Caco-2 (cell line): ENCODE measurements at regions of chr14 and their contacts with region 1.

Region 1: DNA sequence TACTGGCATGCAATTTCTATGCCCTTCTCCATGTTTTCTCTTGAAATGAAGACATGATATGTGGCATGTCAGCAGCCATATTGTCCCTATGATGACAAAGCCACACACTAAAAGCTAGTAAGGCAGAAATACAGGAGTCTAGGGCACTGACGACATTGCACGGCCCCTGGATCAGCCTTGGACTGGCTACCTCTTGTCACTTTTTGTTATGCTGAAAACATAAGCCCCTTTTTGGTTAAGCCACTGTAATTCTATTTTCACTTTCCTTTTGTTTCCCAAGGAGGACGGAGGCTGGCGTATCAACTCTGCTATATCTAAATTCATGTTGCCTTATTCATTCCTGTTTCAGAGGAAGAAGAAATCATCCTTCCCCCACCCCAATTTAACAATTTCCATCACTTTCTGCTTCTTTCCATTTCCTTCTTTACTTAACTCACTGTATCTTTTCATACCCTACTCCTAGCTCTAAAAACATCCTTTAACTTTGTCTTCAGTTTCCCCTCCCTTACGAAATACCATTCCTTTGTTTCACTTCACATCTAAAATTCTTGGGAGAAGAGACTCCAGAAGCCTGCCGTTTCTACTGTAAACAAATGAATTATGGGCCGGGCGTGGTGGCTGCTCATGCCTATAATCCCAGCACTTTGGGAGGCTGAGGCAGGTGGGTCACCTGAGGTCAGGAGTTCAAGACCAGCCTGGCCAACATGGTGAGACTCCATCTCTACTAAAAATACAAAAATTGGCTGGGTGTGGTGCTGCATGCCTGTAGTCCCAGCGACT is 364.1 kb downstream of the PCNX1 start:
- DNase-seq: no peak
- H3K4me3 ChIP-seq: no peak overlapping the region
- H3K4me3 Mint-ChIP-seq: no peak overlapping the region
- H3K27ac Mint-ChIP-seq: no peak overlapping the region
- H3K4me1 ChIP-seq: no peaks in the 10 kb centered on the region
- H3K4me1 Mint-ChIP-seq: no peaks in the 10 kb centered on the region
- H3K27me3 ChIP-seq: no peaks in the 10 kb centered on the region
- H3K27me3 Mint-ChIP-seq: no peaks in the 10 kb centered on the region
- CTCF ChIP-seq: no peak

Region 2: DNA sequence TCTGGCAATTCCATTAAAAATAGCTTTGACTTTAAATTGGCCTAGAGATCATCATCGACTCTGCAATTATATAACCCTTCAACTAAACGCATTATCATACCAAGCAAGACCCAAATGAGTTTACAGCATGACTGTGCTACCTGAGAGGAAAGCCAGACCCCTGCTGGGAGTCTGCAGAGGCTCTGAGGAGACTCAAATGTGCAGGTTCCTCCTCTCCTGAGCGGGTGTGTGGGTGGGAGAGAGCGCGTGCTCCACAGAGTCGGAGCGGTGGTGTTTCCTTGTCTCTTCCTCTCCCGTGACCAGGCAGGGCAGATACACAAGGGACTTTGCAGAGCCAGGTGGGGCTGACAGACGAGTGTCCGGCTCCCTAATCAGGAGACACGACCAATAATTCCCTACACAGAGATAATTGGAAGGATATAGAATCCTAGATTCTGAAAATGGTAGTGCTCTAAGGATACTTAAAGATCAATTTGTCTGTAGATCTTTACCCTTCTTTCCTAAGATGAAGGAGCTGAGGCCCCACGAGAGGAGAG is 1156.7 kb before region 1 on chr14:
- CTCF ChIA-PET with region 1: no interaction called
- POLR2A ChIA-PET with region 1: no interaction called
- intact Hi-C with region 1: loop called (anchors 5 kb)
- DNase-seq: no peak
- H3K4me3 ChIP-seq: no peak overlapping the region
- H3K4me3 Mint-ChIP-seq: no peak overlapping the region
- H3K27ac Mint-ChIP-seq: no peak overlapping the region
- H3K4me1 ChIP-seq: no peaks in the 10 kb centered on the region
- H3K4me1 Mint-ChIP-seq: no peaks in the 10 kb centered on the region
- H3K27me3 ChIP-seq: no peaks in the 10 kb centered on the region; the same call in 1 of the 2 replicates
- H3K27me3 Mint-ChIP-seq: peaks cover 14% of the 10 kb centered on the region
- CTCF ChIP-seq: no peak

Region 3: DNA sequence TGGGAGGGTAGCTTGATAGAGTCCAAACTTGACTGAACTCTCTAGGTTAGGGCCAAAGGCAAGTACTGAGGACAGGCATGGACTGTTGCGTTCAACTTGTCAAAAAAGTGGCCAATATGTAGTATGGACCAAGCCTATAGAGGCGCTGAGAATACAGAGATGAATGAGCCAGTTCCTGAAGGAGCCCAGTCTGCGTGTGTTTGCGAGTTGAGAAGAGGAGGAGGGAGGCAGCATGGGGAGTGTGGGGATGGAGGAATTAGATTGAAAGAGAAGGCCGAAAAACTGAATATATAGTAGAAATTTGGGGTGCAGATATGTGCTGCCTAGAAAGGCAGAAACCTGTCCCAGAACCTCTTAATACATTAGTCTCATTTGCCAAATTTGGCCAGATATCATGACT is 48.3 kb after region 1 on chr14:
- CTCF ChIA-PET with region 1: no interaction called
- POLR2A ChIA-PET with region 1: no interaction called
- intact Hi-C with region 1: no loop called
- DNase-seq: peak in 1 of 2 experiments; percentile 35
- H3K4me3 ChIP-seq: peak overlapping the region; percentile 47
- H3K4me3 Mint-ChIP-seq: peak overlapping the region; percentile 80
- H3K27ac Mint-ChIP-seq: peak overlapping the region; percentile 87
- H3K4me1 ChIP-seq: peaks cover 8% of the 10 kb centered on the region; the same call in 1 of the 2 replicates
- H3K4me1 Mint-ChIP-seq: peaks cover 15% of the 10 kb centered on the region
- H3K27me3 ChIP-seq: no peaks in the 10 kb centered on the region
- H3K27me3 Mint-ChIP-seq: no peaks in the 10 kb centered on the region
- CTCF ChIP-seq: no peak